HCT116 (cell line): ENCODE measurements at regions of chr18 and their contacts with region 1.

Region 1: DNA sequence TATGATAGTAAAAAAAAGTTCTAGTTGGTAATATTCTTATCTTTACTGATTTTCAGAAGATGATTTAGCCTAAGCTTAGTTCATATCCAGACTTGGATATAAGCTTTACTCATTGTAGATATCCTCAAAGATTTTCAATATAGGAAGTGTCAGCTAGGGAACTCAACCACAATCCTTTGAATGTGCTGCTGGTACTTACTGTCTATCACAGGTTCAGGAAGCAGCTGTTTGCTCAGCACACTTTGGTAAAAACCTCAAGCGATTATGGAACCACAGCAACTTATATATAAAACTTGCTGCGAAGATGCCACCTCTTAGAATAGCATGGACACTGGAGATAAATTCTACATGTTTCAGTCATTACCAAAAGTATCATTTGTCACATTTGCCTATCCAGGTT is 60.1 kb upstream of the TNFRSF11A start:
- DNase-seq: no peak
- ATAC-seq: no peak
- H3K4me3 ChIP-seq: no peak overlapping the region
- H3K27ac ChIP-seq: no peak overlapping the region
- H3K4me1 ChIP-seq: no peaks in the 10 kb centered on the region
- H3K27me3 ChIP-seq: no peaks in the 10 kb centered on the region
- CTCF ChIP-seq: no peak
- POLR2A ChIP-seq: no peak
- RAD21 ChIP-seq: no peak

Region 2: GRCh38 chr18:62209046-62209445 is 55.9 kb before region 1 on chr18:
- CTCF ChIA-PET with region 1: no interaction called
- POLR2A ChIA-PET with region 1: no interaction called
- RAD21 ChIA-PET with region 1: no interaction called
- intact Hi-C with region 1: no loop called
- DNase-seq: no peak
- ATAC-seq: no peak
- H3K4me3 ChIP-seq: no peak overlapping the region
- H3K27ac ChIP-seq: no peak overlapping the region
- H3K4me1 ChIP-seq: no peaks in the 10 kb centered on the region
- H3K27me3 ChIP-seq: no peaks in the 10 kb centered on the region
- CTCF ChIP-seq: no peak
- POLR2A ChIP-seq: no peak
- RAD21 ChIP-seq: no peak

Region 3: GRCh38 chr18:62249478-62250097 is 15.4 kb before region 1 on chr18:
- CTCF ChIA-PET with region 1: interaction called, 19 read pairs
- POLR2A ChIA-PET with region 1: no interaction called
- RAD21 ChIA-PET with region 1: no interaction called
- intact Hi-C with region 1: no loop called
- DNase-seq: peak; percentile 69
- ATAC-seq: peak; percentile 72
- H3K4me3 ChIP-seq: no peak overlapping the region
- H3K27ac ChIP-seq: no peak overlapping the region
- H3K4me1 ChIP-seq: no peaks in the 10 kb centered on the region
- H3K27me3 ChIP-seq: no peaks in the 10 kb centered on the region
- CTCF ChIP-seq: peak; percentile 53 to 82 (median 58); a peak in 5 of 6 replicates
- POLR2A ChIP-seq: no peak
- RAD21 ChIP-seq: peak; percentile 63